Naive thymus-derived CD4-positive, alpha-beta T cell (primary cell): ENCODE measurements at regions of chr7 and their contacts with region 1.

Region 1: DNA sequence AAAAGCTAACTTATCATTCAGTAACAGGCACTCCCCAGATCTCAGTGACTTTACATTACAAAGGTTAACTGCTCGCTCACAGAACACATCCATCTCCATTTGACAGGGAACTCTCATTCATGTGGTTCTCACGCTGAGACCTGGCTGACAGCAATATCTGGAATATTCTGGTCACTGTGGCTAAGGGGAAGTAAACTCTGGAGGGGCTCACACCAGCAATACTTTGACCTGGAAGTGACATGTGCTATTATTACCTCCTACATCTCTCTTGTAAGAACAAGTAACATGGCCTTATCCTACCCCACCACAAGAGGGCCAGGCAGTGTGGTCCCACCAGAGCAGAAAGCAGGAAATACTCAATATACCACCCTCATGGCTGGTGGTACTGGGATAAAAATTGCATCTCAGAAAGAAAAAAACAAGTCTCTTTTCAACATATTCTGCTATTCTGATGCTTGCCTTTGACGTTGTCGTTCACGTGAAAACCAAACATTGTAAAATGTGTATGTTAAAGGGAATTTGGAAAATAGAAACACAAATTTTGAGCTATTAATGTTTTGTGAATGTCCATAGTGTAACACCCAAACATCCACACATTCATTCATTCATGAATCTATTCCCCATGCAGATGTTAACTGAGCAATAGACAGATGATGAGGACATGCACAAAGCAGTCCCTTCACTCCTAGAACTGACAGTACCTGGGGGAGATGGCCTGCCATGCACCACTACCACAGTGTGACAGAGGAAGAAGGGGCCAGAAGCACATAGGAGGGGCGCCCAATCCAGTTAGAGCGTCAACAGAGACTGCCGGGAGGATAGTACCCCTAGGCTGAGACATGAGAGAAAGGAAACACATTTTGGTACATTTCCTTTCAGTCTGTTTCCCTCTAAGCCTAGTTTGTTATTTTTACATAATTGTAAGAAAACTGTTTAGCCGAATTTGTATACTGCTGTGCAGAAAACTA is 166.0 kb upstream of the SP4 start:
- DNase-seq: peak in 7 of 9 donors; percentile 20 to 45 (median 27)
- ATAC-seq: peak; percentile 74
- H3K4me3 ChIP-seq: no peak overlapping the region
- H3K4me3 Mint-ChIP-seq: peak overlapping the region in 1 of 10 donors; percentile 49
- H3K27ac ChIP-seq: no peak overlapping the region
- H3K27ac Mint-ChIP-seq: peak overlapping the region in 2 of 9 donors; percentile 60 to 63
- H3K4me1 ChIP-seq: peaks cover 0 to 2% of the 10 kb centered on the region in 2 donors
- H3K4me1 Mint-ChIP-seq: peaks cover 0 to 21% (median 9%) of the 10 kb centered on the region in 7 donors
- H3K27me3 ChIP-seq: no peaks in the 10 kb centered on the region
- H3K27me3 Mint-ChIP-seq: peaks cover 3 to 10% (median 6%) of the 10 kb centered on the region in 5 donors

Region 2: GRCh38 chr7:21243265-21243664 is 18.6 kb before region 1 on chr7:
- CTCF ChIA-PET with region 1: no interaction called
- POLR2A ChIA-PET with region 1: no interaction called
- intact Hi-C with region 1: no loop called
- DNase-seq: no peak
- ATAC-seq: no peak
- H3K4me3 ChIP-seq: no peak overlapping the region
- H3K4me3 Mint-ChIP-seq: no peak overlapping the region
- H3K27ac ChIP-seq: no peak overlapping the region
- H3K27ac Mint-ChIP-seq: no peak overlapping the region
- H3K4me1 ChIP-seq: no peaks in the 10 kb centered on the region
- H3K4me1 Mint-ChIP-seq: no peaks in the 10 kb centered on the region
- H3K27me3 ChIP-seq: no peaks in the 10 kb centered on the region
- H3K27me3 Mint-ChIP-seq: peaks cover 30 to 52% (median 43%) of the 10 kb centered on the region in 5 donors

Region 3: DNA sequence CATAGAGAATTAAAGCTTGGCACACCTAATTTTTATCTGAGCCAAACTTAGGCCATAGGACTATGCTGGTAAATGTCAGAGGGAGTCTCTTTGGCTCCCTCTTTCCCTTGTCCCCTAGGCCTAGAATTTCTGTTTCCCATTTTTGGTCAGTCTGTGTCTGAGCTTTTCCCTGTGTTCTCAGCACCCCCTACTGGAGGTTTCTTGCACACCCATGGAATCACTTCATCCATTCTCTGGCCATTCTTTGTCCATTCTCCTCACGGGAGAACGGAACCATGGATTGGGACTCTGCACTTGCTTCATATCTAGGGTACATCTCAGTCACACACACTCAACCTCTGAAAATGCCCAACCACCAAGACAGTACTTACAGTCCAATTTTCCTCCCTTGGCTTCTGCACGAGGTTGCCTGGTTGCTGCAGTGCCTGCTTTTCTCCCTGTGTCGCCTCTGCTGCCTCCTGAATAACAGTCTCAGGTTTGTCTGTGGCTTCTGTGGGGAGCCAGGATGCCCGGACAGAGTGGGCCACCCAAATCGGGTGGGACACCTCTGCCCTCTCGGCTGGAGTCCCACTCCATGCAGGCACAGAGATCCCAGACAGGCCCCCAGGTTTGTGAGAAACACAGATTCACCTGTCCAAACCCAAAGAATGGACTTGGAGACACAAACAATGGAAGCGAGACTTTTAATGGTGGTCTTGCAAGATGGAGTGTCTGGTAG is 245.9 kb after region 1 on chr7:
- CTCF ChIA-PET with region 1: no interaction called
- POLR2A ChIA-PET with region 1: no interaction called
- intact Hi-C with region 1: loop called in 1 of 2 experiments (anchors 1 kb)
- DNase-seq: peak in 4 of 9 donors; percentile 6 to 26 (median 16)
- ATAC-seq: peak; percentile 61
- H3K4me3 ChIP-seq: no peak overlapping the region
- H3K4me3 Mint-ChIP-seq: no peak overlapping the region
- H3K27ac ChIP-seq: no peak overlapping the region
- H3K27ac Mint-ChIP-seq: no peak overlapping the region
- H3K4me1 ChIP-seq: no peaks in the 10 kb centered on the region
- H3K4me1 Mint-ChIP-seq: peaks cover 0 to 7% (median 3%) of the 10 kb centered on the region in 7 donors
- H3K27me3 ChIP-seq: no peaks in the 10 kb centered on the region
- H3K27me3 Mint-ChIP-seq: no peaks in the 10 kb centered on the region